ENCODE measurements at regions of chr15 and their contacts with region 1.

Region 1: GRCh38 chr15:32657198-32657883 is 15.8 kb downstream of the SCG5 start:
- DNase-seq: no peak
- H3K4me3 ChIP-seq: no peak overlapping the region
- H3K4me3 Mint-ChIP-seq: no peak overlapping the region
- H3K27ac Mint-ChIP-seq: no peak overlapping the region
- H3K4me1 ChIP-seq: no peaks in the 10 kb centered on the region
- H3K4me1 Mint-ChIP-seq: no peaks in the 10 kb centered on the region
- H3K27me3 ChIP-seq: no peaks in the 10 kb centered on the region
- H3K27me3 Mint-ChIP-seq: no peaks in the 10 kb centered on the region
- CTCF ChIP-seq: peak in 1 of 2 experiments; percentile 13

Region 2: DNA sequence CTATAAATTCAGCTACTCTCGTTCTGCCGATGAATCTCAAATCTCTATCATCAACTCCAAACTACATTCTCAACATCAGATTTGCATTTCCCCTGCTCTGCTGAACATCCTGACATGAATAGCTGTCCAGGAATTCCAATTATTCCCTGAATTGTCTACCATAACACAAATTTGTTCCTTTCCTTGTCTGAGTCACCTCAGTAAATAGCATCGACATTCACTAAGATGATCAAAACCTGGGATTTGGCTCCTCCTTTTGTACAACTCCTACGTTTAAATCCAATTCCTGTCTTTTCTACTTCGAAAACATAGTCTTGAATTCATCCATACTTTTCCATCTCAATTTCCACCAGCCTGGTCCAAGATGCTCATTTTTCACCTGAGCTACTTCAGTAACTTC is 167.4 kb after region 1 on chr15:
- CTCF ChIA-PET with region 1: interaction called, 3 read pairs
- POLR2A ChIA-PET with region 1: no interaction called
- intact Hi-C with region 1: loop called (anchors 5 kb)
- DNase-seq: no peak
- H3K4me3 ChIP-seq: no peak overlapping the region
- H3K4me3 Mint-ChIP-seq: no peak overlapping the region
- H3K27ac Mint-ChIP-seq: no peak overlapping the region
- H3K4me1 ChIP-seq: peaks cover 5% of the 10 kb centered on the region; the same call in 1 of the 2 replicates
- H3K4me1 Mint-ChIP-seq: peaks cover 14% of the 10 kb centered on the region
- H3K27me3 ChIP-seq: no peaks in the 10 kb centered on the region
- H3K27me3 Mint-ChIP-seq: no peaks in the 10 kb centered on the region
- CTCF ChIP-seq: no peak

Region 3: DNA sequence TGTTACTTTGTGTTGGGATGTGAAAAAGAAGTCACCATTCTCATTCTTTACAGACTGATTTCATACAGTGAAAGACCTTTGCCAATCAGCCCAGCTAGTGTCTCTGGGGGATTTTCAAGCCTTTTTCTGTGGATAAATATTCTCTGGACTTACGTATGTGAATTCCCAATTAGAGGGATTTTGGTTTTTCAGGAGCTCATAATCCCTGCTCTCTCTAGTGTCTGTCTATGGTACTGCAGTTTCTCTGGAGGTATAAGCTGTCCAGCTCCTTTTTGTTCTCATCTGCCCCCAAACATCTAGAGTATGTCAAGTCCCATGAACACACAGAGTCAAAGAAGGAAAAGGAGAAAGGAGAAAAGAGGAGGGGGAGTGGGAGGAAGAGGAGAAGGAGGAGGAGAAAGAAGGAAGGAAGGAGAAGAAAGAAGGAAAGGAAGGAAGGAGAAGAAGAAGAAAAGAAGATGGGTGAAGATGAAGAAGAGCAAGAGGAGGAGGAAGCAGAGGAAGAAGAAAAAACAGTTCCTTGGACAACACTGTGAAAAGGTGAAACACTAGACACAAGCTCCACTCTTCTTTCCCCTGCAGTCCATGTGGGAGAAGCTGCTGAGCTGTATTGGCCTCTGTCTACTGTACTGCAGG is 279.1 kb after region 1 on chr15:
- CTCF ChIA-PET with region 1: interaction called, 33 read pairs
- POLR2A ChIA-PET with region 1: no interaction called
- intact Hi-C with region 1: loop called (anchors 1 kb)
- DNase-seq: peak in 1 of 2 experiments; percentile 24
- H3K4me3 ChIP-seq: no peak overlapping the region
- H3K4me3 Mint-ChIP-seq: no peak overlapping the region
- H3K27ac Mint-ChIP-seq: no peak overlapping the region
- H3K4me1 ChIP-seq: no peaks in the 10 kb centered on the region
- H3K4me1 Mint-ChIP-seq: no peaks in the 10 kb centered on the region
- H3K27me3 ChIP-seq: no peaks in the 10 kb centered on the region; the same call in 1 of the 2 replicates
- H3K27me3 Mint-ChIP-seq: peaks cover 7% of the 10 kb centered on the region
- CTCF ChIP-seq: peak; percentile 53 to 58

Region 4: DNA sequence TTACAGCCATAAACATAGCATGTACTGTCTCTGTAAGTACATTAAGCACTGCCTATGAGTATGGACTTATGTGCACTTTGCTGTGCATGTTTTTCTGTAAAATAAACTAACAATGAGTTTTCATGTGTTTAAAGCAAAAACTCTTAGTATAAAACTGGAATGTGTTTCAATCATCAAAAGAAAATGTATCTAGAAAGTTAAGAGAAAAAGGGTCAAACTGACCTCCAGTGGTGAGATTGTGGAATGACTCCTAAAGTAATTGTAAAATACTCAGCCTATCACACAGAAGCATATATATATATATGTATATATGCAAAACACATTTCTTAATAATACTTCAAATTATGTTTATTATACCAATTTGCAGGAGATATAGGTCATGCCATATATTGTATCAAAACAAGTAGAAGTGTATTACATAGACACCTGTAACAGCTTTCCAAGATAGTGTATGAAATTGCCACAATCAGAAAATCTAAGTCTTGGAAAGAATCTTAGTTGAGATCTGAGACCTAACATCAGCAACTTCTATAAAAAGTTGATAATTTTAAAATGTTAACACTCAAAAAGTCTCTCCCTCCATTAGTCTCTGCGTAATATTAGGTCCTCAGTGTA is 337.6 kb after region 1 on chr15:
- CTCF ChIA-PET with region 1: no interaction called
- POLR2A ChIA-PET with region 1: no interaction called
- intact Hi-C with region 1: loop called (anchors 1 kb)
- DNase-seq: peak in 1 of 2 experiments; percentile 9
- H3K4me3 ChIP-seq: no peak overlapping the region
- H3K4me3 Mint-ChIP-seq: no peak overlapping the region
- H3K27ac Mint-ChIP-seq: no peak overlapping the region
- H3K4me1 ChIP-seq: no peaks in the 10 kb centered on the region
- H3K4me1 Mint-ChIP-seq: no peaks in the 10 kb centered on the region
- H3K27me3 ChIP-seq: no peaks in the 10 kb centered on the region
- H3K27me3 Mint-ChIP-seq: peaks cover 14% of the 10 kb centered on the region
- CTCF ChIP-seq: peak; percentile 36 to 38